CD4-positive, alpha-beta T cell (primary cell): ENCODE measurements at regions of chr20 and their contacts with region 1.

Region 1: DNA sequence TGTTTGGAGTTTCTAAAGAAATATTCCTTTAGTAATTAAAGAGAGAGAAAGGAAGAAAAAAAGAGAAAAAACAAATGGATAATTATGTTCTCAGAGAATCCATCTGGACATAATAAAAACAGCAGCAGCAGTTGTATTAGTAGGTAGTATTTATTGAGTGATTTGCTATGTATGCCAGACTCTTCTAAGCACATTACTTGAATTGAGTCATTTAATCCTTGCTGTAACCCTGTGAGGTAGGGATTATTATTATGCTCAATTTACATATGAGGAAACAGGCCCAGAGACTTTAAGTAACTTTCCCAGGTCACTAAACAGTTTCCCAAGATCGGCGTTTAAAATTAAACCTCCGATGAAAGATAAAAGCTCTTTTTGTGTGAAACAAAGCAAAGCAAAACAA is 238.8 kb downstream of the TSHZ2 start:
- DNase-seq: no peak
- ATAC-seq: no peak
- H3K4me3 ChIP-seq: no peak overlapping the region
- H3K4me3 Mint-ChIP-seq: no peak overlapping the region
- H3K27ac ChIP-seq: no peak overlapping the region
- H3K27ac Mint-ChIP-seq: no peak overlapping the region
- H3K4me1 ChIP-seq: peaks cover 32% of the 10 kb centered on the region
- H3K4me1 Mint-ChIP-seq: peaks cover 41% of the 10 kb centered on the region
- H3K27me3 ChIP-seq: no peaks in the 10 kb centered on the region
- H3K27me3 Mint-ChIP-seq: no peaks in the 10 kb centered on the region
- CTCF ChIP-seq: no peak

Region 2: GRCh38 chr20:53157443-53158408 is 53.2 kb before region 1 on chr20:
- CTCF ChIA-PET with region 1: no interaction called
- POLR2A ChIA-PET with region 1: no interaction called
- intact Hi-C with region 1: loop called (anchors 5 kb)
- DNase-seq: peak in 11 of 14 experiments; percentile 5 to 58 (median 20)
- ATAC-seq: no peak
- H3K4me3 ChIP-seq: no peak overlapping the region
- H3K4me3 Mint-ChIP-seq: no peak overlapping the region
- H3K27ac ChIP-seq: no peak overlapping the region
- H3K27ac Mint-ChIP-seq: no peak overlapping the region
- H3K4me1 ChIP-seq: no peaks in the 10 kb centered on the region
- H3K4me1 Mint-ChIP-seq: peaks cover 39% of the 10 kb centered on the region
- H3K27me3 ChIP-seq: no peaks in the 10 kb centered on the region
- H3K27me3 Mint-ChIP-seq: no peaks in the 10 kb centered on the region
- CTCF ChIP-seq: peak; percentile 50